ENCODE measurements at regions of chr6 and their contacts with region 1.

Region 1: GRCh38 chr6:52284460-52285176 is at the start of gene MCM3:
- DNase-seq: peak; percentile 99

Region 2: GRCh38 chr6:52399511-52400312 is 115.1 kb after region 1 on chr6:
- in situ Hi-C with region 1: loop called (anchors 25 kb)
- DNase-seq: peak; percentile 60

Measured in ACHN (cell line).